BJ (cell line): ENCODE measurements at regions of chr15 and their contacts with region 1.

Region 1: GRCh38 chr15:58070801-58071418 is 5.4 kb upstream of the ALDH1A2 start:
- DNase-seq: no peak
- H3K4me3 ChIP-seq: no peak overlapping the region
- H3K27me3 ChIP-seq: peaks cover 2% of the 10 kb centered on the region
- CTCF ChIP-seq: peak; percentile 91

Region 2: GRCh38 chr15:57561041-57561711 is 509.7 kb before region 1 on chr15:
- CTCF ChIA-PET with region 1: interaction called, 21 read pairs
- POLR2A ChIA-PET with region 1: no interaction called
- DNase-seq: peak; percentile 49
- H3K4me3 ChIP-seq: no peak overlapping the region
- H3K27me3 ChIP-seq: no peaks in the 10 kb centered on the region
- CTCF ChIP-seq: peak; percentile 92

Region 3: GRCh38 chr15:57667171-57667849 is 403.6 kb before region 1 on chr15:
- CTCF ChIA-PET with region 1: interaction called, 11 read pairs
- POLR2A ChIA-PET with region 1: no interaction called
- DNase-seq: peak; percentile 68
- H3K4me3 ChIP-seq: no peak overlapping the region
- H3K27me3 ChIP-seq: no peaks in the 10 kb centered on the region
- CTCF ChIP-seq: peak; percentile 54

Region 4: DNA sequence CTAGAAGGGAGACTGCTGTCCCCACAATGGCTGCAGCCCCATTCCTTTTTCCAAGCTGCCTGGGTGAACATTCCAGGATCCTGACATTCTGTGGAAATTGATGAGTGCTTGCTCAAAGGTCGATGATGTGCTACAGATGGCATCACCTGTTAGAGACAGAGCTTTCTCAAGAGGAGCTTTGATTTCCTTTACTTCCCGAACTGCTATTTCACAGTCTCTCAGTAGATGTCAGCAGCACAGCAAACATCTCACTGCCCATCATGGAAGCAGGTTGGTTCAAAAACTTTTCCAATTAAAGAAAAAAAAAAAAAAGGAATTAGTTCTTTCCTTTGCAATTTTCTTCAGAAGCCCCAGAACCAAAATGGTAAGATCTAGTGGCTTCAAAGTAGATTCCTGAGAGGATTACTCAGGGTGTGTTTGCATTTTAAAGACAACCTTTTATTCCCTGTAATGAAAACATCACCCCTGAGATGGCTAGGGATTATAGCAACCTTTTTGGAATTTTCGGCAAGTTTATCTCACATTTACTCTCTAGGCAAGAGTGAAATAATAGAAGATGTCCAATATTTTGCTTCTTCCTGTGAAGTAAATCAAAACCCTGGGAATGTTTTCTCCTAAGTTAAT is 319.6 kb before region 1 on chr15:
- CTCF ChIA-PET with region 1: interaction called, 221 read pairs
- POLR2A ChIA-PET with region 1: no interaction called
- DNase-seq: no peak
- H3K4me3 ChIP-seq: no peak overlapping the region
- H3K27me3 ChIP-seq: no peaks in the 10 kb centered on the region
- CTCF ChIP-seq: peak; percentile 77

Region 5: DNA sequence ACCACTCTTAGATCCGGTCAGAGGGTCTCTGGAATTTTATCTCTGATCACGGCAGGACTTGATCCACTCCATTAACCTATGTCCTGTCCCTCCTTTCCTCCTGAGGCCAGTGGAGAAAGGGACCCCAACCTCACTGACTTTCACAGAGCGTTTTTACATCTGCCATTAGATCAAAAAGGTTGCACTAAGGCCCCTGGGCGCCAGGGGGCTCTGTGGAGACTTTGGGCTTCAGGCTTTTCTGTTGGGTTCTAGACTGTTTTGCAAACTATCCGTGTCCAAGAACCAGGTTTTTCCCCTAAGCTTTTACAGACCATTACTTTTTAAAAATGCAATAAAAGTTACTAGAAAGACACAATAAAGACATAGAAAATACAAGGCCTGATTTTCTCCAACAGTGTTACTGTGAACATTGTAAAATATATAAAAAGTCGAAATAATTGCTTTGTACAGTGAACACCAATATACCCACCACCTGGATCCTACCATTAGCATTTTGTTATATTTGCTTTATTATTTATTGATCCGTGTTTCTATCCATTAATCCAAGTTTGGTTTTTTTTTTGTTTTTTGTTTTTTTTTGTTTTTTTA is 204.7 kb before region 1 on chr15:
- CTCF ChIA-PET with region 1: interaction called, 32 read pairs
- POLR2A ChIA-PET with region 1: no interaction called
- DNase-seq: no peak
- H3K4me3 ChIP-seq: no peak overlapping the region
- H3K27me3 ChIP-seq: no peaks in the 10 kb centered on the region
- CTCF ChIP-seq: peak; percentile 84

Region 6: DNA sequence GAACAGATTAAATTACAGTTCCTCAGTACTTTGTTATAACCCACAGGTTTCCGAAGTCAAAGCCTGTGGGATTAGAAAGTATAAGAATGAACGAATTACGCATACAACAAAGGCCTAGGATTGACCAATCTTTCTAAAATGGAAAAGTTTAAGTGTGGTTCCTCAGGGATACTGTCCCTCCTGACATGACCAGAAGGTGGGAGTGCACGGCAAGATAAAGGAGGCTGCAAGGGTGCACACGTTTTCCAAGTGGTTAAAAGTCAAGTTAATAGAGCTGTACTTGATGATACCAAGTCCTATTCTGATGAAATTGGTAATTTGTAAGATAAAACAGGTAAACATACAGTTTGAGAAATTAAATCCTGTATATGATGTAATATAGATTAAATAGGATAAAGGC is 101.6 kb before region 1 on chr15:
- CTCF ChIA-PET with region 1: interaction called, 10 read pairs
- POLR2A ChIA-PET with region 1: no interaction called
- DNase-seq: no peak
- H3K4me3 ChIP-seq: no peak overlapping the region
- H3K27me3 ChIP-seq: peaks cover 3% of the 10 kb centered on the region; the same call in 1 of the 2 replicates
- CTCF ChIP-seq: peak; percentile 16; the same call in 1 of the 2 replicates

Region 7: DNA sequence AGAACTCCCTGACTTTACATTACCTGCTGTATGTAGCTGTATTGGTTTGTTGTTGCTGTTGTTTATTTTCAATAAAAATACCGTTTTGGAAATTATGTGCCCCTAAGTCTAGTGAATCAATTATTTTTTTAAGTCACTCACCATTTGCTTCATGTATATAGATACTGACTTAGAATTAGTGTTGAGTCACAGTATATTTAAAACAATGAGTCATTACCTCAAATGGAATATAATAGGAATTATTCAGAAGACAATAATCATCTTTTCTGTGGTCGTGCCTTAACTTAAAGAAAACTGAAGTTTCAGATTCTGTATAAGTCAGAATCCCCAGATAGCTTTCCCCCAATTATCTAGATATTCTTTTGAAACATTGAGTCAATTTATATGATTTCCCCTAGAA is 15.6 kb after region 1 on chr15:
- CTCF ChIA-PET with region 1: interaction called, 21 read pairs
- POLR2A ChIA-PET with region 1: no interaction called
- DNase-seq: no peak
- H3K4me3 ChIP-seq: no peak overlapping the region
- H3K27me3 ChIP-seq: no peaks in the 10 kb centered on the region
- CTCF ChIP-seq: no peak